ENCODE measurements at regions of chrX and their contacts with region 1.

Region 1: DNA sequence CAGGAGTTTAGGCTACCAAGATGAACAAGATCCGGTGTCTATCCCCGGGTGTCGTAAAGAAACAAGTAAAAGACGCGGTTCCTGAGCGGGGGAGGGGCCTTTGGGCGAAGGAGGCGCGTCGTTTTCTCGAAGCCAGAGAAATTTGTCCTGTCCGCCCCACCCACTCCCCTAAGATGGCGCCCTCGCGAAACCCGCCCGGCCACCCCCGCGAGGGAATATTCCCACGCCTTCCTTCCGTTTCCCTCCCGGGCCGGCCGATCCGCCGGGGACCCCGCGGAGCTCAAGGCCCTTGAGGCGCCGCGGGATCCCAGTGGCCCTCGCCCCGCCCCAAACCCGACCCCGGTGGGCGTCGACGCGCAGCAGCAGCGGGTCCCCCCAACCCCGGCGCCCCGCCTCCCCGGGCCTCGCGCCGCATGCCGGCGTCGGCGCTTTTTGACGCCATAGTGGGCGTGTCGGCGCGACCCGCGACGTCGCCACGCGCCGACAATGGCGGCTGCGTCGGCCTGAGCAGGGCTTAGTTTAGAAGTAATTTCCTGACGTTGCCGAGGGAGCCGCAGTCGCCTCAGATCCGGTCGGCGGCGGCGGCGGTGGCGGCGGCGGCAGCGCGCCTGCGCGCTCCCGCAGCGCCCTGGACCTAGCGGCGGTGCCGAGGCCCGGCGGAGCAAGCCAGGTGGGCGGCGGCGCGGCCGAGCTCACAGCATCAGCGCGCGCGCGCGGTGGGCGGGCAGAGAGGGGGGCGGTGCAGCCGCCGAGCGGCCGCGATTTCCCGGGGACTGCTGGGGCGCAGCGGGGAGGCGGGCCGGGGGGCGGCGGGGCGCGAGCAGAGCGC is at the start of gene HTATSF1:
- DNase-seq: peak; percentile 93
- H3K4me3 Mint-ChIP-seq: peak within 1 kb of the TSS; percentile 90
- H3K27ac Mint-ChIP-seq: peak within 1 kb of the TSS; percentile 94
- H3K4me1 Mint-ChIP-seq: peaks cover 18% of the 10 kb centered on the region
- H3K27me3 Mint-ChIP-seq: no peaks in the 10 kb centered on the region
- total RNA-seq, gene HTATSF1: 38.9 to 40.4 TPM

Region 2: DNA sequence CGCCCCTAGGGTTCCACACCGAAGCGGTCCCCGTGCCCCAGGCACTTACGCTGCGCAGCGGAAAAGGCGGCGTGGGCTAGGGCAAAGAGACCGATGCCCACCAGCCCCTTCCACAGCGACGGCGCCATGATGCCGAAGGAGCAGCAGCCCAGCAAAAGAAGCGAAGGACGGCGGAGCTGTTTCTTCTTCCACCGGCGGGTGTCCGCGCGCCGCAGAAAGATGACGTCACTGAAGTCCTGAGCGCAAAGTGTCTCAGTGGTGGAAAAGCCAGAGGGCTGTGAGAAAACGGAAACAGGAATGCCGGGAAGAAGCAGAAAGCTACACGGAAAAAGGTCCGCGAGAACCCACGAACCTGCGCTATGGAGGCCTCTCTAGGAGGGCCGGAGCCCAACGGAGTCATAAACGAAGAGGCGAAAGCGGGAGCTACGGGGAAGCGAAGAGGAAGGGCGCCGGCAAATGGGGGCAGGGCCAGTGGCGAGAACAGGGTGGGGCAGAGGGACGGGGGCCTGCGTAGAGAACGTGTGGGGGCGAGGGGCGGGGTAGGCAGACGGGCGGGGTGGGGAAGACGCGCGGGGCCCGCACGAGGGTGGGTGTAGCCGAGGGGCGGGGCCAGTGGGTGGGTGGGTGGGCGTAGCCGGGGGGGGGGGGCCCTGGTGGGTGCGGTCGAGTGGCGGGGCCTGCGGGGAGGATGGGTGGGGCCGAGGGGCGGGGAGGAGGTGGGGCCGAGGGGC is 523.3 kb before region 1 on chrX and contains the start of gene MMGT1:
- CTCF ChIA-PET with region 1: no interaction called
- intact Hi-C with region 1: loop called (anchors 1 kb)
- DNase-seq: peak; percentile 84
- H3K4me3 Mint-ChIP-seq: peak within 1 kb of the TSS; percentile 95
- H3K27ac Mint-ChIP-seq: peak within 1 kb of the TSS; percentile 92
- H3K4me1 Mint-ChIP-seq: peaks cover 23% of the 10 kb centered on the region
- H3K27me3 Mint-ChIP-seq: no peaks in the 10 kb centered on the region
- total RNA-seq, gene MMGT1: 17.0 to 17.1 TPM

Region 3: DNA sequence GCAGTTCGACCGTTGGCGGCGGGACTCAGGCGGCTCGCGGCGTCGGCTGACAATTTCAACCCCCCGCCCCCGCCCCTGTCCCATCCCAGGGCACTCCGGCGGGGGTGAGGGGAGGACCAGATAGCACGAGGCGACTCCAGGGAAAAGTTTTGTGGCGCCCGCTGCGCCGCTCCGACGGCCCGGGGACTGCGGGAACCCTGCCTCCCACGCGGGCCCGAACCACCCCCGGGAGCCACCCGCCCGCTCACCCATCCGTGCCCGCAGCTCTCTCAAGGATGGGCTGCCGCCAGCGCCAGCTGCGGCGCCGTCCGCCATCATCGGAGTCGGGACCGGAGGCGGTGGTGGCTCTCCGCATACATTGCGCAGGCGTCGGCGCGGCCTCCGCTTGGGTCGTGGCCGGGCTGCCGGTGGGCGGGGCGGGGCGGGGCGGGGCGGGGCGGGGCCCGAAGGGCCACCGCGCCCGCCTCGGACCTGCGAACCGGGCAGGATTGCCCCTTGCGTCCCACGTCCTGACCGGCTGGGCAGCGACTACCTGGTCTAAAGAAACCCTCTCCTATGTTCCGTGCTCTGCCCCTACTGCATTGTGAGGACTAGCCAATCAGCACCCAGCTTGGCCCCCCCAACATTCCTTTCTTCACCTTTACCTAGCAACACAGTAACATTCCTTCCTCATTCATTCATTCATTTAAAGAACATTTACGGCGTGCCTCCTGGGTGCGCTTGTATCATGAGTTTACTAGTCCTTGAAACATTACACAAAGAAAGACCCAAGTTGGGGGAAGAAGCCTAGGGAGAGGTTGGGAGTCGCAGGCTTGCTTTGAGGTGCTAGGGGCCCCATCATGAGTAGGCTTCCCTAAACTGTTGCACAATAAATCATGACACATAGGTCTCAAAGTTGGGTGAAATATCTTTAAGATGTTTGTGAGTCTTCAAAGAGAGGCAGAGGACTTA is 245.7 kb before region 1 on chrX and contains the start of gene MAP7D3:
- CTCF ChIA-PET with region 1: no interaction called
- intact Hi-C with region 1: loop called (anchors 1 kb)
- DNase-seq: peak; percentile 66
- H3K4me3 Mint-ChIP-seq: peak within 1 kb of the TSS; percentile 83
- H3K27ac Mint-ChIP-seq: peak within 1 kb of the TSS; percentile 56
- H3K4me1 Mint-ChIP-seq: peaks cover 12% of the 10 kb centered on the region
- H3K27me3 Mint-ChIP-seq: no peaks in the 10 kb centered on the region
- total RNA-seq, gene MAP7D3: 10.4 to 12.5 TPM

Region 4: DNA sequence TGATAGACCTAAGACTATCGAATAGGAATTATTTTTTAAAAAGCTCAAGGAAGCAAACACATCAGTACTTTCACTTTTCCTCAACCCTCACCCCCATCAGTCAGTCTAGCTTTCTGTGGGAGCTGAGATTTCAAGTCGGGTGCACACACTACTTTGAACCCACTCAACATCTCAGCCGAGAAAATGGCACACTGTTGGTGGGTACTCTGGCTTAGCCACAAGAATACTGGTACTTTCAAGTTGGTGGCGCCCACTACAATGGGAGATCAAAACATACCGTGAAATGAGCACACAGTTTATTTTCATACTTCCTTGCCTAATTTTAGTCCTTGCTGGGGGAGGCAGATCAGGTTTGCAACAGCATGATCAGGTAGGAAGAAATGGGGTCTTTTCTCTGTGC is 161.2 kb after region 1 on chrX:
- CTCF ChIA-PET with region 1: no interaction called
- intact Hi-C with region 1: loop called (anchors 5 kb)
- DNase-seq: peak; percentile 34
- H3K4me3 Mint-ChIP-seq: peak overlapping the region; percentile 96
- H3K27ac Mint-ChIP-seq: peak overlapping the region; percentile 100
- H3K4me1 Mint-ChIP-seq: peaks cover 74% of the 10 kb centered on the region
- H3K27me3 Mint-ChIP-seq: no peaks in the 10 kb centered on the region

Region 5: DNA sequence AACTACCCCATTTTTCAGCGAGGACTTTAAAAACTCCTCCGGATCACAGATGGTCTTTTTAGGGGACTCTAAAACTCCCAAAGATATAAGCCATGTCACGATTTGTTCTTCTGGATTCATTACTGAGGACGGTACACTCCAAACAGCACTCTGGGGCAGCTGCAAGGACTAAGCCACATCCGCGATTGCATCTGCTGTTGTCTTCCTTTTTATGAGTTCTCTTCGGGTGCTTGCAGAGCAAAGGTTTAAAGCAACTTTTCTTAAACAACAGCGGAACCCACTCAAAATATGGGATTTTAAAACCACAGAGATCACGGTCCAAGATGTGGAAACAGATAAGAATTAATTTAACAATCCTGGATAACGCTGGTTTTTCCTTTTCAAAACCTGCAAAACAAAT is 283.8 kb after region 1 on chrX and contains the start of gene ARHGEF6:
- CTCF ChIA-PET with region 1: no interaction called
- intact Hi-C with region 1: loop called (anchors 1 kb)
- DNase-seq: peak; percentile 54
- H3K4me3 Mint-ChIP-seq: peak within 1 kb of the TSS; percentile 90
- H3K27ac Mint-ChIP-seq: peak within 1 kb of the TSS; percentile 99
- H3K4me1 Mint-ChIP-seq: peaks cover 49% of the 10 kb centered on the region
- H3K27me3 Mint-ChIP-seq: no peaks in the 10 kb centered on the region
- total RNA-seq, gene ARHGEF6: 56.1 to 58.5 TPM

Region 6: DNA sequence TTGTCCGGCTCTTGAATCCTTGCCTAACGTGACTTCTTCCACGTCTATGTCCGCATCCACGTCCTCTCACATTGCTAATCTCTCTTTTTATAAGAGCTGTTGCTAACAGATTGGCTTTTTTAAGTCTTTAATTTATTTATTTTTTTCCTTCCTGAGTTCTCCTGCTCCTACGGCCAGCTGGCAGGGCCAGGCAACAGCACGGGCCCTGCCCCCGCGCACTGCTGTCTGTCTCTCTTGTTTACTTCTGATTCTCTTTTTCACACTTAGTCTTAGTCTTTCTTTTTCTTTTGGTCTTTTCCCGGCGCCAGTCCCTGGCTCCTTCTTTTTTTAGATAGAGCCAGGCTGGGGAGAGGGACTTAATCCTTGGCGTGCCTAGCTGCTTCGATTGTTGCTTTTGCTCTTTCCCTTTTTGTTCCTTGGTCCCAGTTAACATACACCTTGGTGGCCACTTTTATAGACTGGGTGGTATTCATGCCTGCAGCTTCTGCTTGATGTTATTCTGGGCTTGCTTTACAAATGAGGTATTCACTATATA is 436.7 kb after region 1 on chrX:
- CTCF ChIA-PET with region 1: no interaction called
- intact Hi-C with region 1: loop called (anchors 2 kb)
- DNase-seq: no peak
- H3K4me3 Mint-ChIP-seq: no peak overlapping the region
- H3K27ac Mint-ChIP-seq: no peak overlapping the region
- H3K4me1 Mint-ChIP-seq: peaks cover 14% of the 10 kb centered on the region
- H3K27me3 Mint-ChIP-seq: no peaks in the 10 kb centered on the region